ENCODE measurements at regions of chr5 and their contacts with region 1.

Region 1: DNA sequence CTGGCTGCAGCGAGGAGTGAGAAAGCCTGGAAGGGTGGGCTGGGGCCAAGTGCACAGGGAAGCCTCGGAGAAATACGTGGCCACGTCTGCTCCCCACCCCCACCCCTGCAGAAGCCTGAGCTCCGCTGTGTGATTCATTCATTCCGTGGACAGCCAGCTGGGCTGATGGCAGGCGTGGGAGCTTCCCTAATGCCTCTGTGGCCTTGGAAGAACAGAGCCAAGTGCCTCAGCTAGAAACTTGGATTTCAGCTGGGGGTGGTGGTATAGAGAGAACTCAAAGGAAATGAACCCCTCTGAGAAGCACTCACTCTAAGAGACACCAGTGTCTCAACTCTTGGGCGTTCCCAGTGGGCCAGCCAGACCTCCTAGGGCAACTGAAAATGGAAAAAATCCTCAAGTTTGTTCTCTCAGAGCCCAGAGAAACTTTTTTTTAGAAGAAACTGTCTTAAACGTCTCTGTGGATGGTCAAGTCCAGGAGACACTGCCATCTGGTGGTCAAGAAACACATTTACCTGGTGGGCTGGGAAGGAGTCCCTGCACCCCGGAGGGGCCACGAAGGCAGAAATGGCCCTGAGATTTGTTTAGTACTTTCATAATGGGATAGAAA is 18.0 kb downstream of the ATOX1 start:
- DNase-seq: peak; percentile 55
- H3K4me3 Mint-ChIP-seq: no peak overlapping the region
- H3K27ac Mint-ChIP-seq: no peak overlapping the region
- H3K4me1 Mint-ChIP-seq: peaks cover 23% of the 10 kb centered on the region
- H3K27me3 Mint-ChIP-seq: no peaks in the 10 kb centered on the region

Region 2: DNA sequence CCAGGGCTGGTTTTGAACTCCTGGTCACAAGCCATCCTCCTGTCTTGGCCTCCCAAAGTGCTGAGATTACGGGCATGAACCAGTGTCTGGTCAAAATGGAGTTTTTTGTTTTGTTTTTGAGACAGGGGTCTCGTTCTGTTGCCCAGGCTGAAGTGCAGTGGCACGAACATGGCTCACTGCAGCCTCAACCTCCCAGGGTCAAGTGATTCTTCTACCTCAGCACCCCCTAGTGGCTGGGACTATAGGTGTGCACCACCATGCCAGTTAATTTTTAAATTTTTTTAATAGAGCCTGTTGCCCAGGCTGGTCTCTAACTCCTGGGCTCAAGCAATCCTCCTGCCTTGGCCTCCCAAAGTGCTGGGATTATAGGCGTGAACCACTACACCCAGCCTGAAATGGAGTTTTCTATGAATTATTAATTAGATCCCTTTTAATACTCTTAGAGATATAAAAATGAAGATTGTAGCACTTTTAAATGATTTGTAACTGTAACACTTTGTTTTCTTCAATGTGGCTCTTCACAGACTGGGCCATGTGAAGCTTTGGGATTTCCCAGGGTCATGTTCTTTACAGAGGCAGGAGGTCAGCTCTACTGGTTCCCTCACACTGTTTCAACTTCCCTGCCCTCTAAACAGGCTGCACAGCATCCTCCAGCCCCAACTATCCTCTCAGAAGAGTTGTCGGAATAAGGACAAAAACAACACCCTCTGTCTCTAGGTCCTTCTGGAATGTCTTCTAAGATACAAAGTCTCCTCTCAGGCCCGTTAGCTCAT is 21.0 kb before region 1 on chr5:
- CTCF ChIA-PET with region 1: interaction called, 10 read pairs
- POLR2A ChIA-PET with region 1: no interaction called
- intact Hi-C with region 1: loop called (anchors 2 kb)
- DNase-seq: peak; percentile 36
- H3K4me3 Mint-ChIP-seq: no peak overlapping the region
- H3K27ac Mint-ChIP-seq: no peak overlapping the region
- H3K4me1 Mint-ChIP-seq: peaks cover 10% of the 10 kb centered on the region
- H3K27me3 Mint-ChIP-seq: no peaks in the 10 kb centered on the region

Region 3: GRCh38 chr5:151758430-151759241 is 18.2 kb after region 1 on chr5 and contains the start of gene ATOX1:
- CTCF ChIA-PET with region 1: interaction called, 6 read pairs
- POLR2A ChIA-PET with region 1: interaction called, 3 read pairs
- intact Hi-C with region 1: loop called (anchors 1 kb)
- DNase-seq: peak; percentile 94
- H3K4me3 Mint-ChIP-seq: peak within 1 kb of the TSS; percentile 77
- H3K27ac Mint-ChIP-seq: peak within 1 kb of the TSS; percentile 69
- H3K4me1 Mint-ChIP-seq: peaks cover 32% of the 10 kb centered on the region
- H3K27me3 Mint-ChIP-seq: no peaks in the 10 kb centered on the region
- total RNA-seq, gene ATOX1: 83.1 to 89.9 TPM

Region 4: GRCh38 chr5:151855701-151856100 is 115.3 kb after region 1 on chr5:
- CTCF ChIA-PET with region 1: no interaction called
- POLR2A ChIA-PET with region 1: no interaction called
- intact Hi-C with region 1: no loop called
- DNase-seq: no peak
- H3K4me3 Mint-ChIP-seq: no peak overlapping the region
- H3K27ac Mint-ChIP-seq: no peak overlapping the region
- H3K4me1 Mint-ChIP-seq: no peaks in the 10 kb centered on the region
- H3K27me3 Mint-ChIP-seq: no peaks in the 10 kb centered on the region

Region 5: DNA sequence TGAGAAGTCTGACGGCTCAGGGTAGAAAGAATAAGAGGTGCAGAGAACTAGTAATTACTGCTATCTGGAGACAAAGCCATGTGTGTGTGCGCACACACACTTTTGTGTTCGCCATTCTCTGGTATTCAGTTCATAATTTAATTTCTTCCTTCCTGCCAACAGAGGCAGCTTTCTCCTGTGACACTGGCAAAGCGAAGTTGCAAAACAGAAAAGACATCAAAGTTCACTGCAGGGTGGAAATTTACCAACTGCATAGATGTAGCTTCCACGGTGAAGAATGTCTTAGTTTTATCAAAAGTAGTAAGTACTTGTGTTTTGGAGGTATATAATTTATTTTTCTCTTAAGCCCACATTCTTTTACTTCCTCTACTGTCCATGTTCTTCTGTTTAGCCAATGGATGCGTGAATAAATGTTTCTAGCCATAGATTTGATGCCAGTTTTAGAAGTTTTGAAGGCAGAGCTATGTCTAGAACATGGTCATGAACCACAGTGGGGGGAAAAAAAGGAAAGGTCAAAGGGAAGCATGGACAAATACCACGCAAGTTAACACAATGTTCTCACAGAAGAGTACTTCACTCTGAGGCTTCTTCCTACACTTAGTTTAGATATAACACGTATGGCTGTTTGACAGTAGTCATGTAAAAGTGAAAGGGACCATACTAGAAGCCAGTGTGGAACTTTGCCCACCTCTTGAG is 1213.5 kb after region 1 on chr5:
- CTCF ChIA-PET with region 1: no interaction called
- POLR2A ChIA-PET with region 1: no interaction called
- intact Hi-C with region 1: no loop called
- DNase-seq: no peak
- H3K4me3 Mint-ChIP-seq: no peak overlapping the region
- H3K27ac Mint-ChIP-seq: no peak overlapping the region
- H3K4me1 Mint-ChIP-seq: no peaks in the 10 kb centered on the region
- H3K27me3 Mint-ChIP-seq: no peaks in the 10 kb centered on the region